ENCODE measurements at regions of chr20 and their contacts with region 1.

Region 1: GRCh38 chr20:37161830-37162549 is 17.1 kb upstream of the RPN2 start:
- DNase-seq: no peak

Region 2: DNA sequence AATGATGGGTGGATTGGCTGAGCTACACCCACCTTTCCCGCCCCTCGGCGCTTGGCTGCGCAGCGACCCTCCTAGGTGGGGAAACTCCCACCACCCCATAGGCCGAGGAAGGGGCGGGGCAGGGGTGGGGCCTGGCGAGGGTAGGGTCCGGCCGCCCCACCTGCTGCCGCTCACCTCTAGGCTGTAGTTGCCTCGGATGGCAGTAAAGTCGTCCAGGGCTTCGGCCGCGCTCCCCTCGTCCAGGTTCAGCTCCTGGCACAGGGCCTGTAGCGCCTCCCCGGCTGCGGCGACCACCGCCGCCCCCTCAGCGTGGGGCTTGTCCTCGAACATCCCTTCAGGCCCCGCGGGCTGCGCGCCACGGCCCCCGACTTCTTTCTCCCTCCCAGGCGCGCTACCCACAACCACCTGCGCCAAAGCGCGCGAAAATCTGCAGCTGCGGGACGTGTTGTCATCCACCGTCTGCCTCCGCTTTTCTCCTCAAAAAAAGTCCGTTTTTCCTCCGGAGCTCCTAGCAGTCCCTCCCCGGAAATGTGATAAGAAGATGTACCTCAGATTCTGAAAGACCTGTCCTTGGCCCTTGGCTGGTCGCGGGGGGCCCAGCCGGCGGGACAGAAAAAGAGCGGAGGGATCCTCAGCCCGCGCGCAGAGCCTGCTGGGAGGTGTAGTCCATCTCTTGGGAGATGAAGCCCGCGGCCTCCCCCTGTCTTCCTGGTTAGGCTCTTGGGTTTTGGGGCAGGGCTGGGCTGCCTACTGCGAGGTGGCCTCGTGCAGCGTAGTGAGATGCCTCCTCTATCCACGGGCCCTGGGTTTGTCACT is 66.2 kb before region 1 on chr20 and contains the start of gene RBL1:
- CTCF ChIA-PET with region 1: no interaction called
- POLR2A ChIA-PET with region 1: interaction called, 14 read pairs
- DNase-seq: peak; percentile 80

Measured in HEK293T (cell line).